Activated CD8-positive, alpha-beta T cell treated with anti-CD3 and anti-CD28 coated beads for 36 hours (primary cell): ENCODE measurements at regions of chr19 and their contacts with region 1.

Region 1: DNA sequence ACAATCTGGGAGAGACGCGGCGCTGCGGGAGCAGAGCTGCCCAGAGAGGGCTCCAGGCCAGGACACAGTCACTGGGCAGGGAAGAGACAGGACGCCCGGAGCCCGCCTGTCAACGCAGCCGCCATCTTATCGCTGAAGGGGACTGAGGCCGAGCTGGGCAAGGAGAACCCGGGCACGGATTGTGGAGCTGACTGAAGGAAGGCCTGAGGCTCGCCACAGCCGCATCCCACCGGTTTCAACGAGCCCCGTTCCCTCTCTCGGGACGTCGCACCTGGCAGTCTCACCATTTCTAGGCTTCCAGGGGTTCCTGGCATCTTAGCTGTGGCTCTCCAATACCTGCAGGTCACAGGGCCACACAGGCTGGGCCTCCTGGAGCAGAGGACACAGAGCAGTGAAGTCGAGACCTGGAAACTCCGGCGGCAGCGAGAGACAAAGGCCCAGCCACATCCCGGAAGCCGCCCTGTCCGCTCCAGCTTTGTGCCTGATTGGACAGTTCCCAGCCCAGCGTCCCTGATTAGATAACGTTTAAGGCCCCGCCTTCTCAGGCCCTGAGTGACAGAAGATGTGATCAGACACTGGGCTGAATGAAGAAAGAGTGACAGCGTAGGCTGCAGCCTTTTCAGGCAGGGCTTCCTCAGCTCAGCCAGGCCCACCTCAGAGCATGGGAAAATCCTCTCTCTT is at the start of gene ZNF91:
- DNase-seq: peak; percentile 98
- ATAC-seq: peak; percentile 96
- H3K4me3 Mint-ChIP-seq: peak within 1 kb of the TSS; percentile 97
- H3K27ac Mint-ChIP-seq: peak within 1 kb of the TSS; percentile 99
- H3K4me1 Mint-ChIP-seq: peaks cover 29% of the 10 kb centered on the region
- H3K27me3 Mint-ChIP-seq: no peaks in the 10 kb centered on the region
- CTCF ChIP-seq: no peak
- total RNA-seq, gene ZNF91: 35.8 to 38.2 TPM

Region 2: GRCh38 chr19:23273590-23274413 is 121.4 kb before region 1 on chr19:
- CTCF ChIA-PET with region 1: no interaction called
- POLR2A ChIA-PET with region 1: interaction called, 12 read pairs
- intact Hi-C with region 1: no loop called
- DNase-seq: peak; percentile 97
- ATAC-seq: peak; percentile 99
- H3K4me3 Mint-ChIP-seq: peak overlapping the region; percentile 91
- H3K27ac Mint-ChIP-seq: peak overlapping the region; percentile 92
- H3K4me1 Mint-ChIP-seq: peaks cover 23% of the 10 kb centered on the region
- H3K27me3 Mint-ChIP-seq: no peaks in the 10 kb centered on the region
- CTCF ChIP-seq: no peak

Region 3: DNA sequence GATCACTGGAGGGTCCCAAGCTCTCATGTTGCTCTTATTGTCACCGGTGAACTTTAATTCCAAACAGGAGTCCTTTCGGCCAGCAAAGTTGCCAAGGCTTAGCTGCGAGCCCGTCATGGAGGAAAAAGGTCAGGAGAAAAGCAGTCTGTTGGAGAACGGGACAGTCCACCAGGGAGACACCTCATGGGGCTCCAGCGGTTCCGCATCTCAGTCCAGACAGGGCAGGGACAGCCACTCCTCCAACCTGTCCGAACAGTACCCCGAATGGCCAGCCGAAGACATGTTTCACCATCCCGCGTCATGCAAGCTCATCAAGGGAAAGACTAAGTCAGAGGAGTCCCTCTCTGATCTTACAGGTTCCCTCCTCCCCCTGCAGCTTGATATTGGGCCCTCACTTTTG is 10.3 kb before region 1 on chr19:
- CTCF ChIA-PET with region 1: interaction called, 17 read pairs
- POLR2A ChIA-PET with region 1: interaction called, 18 read pairs
- intact Hi-C with region 1: no loop called
- DNase-seq: no peak
- ATAC-seq: no peak
- H3K4me3 Mint-ChIP-seq: no peak overlapping the region
- H3K27ac Mint-ChIP-seq: no peak overlapping the region
- H3K4me1 Mint-ChIP-seq: peaks cover 29% of the 10 kb centered on the region
- H3K27me3 Mint-ChIP-seq: no peaks in the 10 kb centered on the region
- CTCF ChIP-seq: no peak

Region 4: GRCh38 chr19:23525276-23525852 is 130.2 kb after region 1 on chr19:
- CTCF ChIA-PET with region 1: no interaction called
- POLR2A ChIA-PET with region 1: no interaction called
- intact Hi-C with region 1: no loop called
- DNase-seq: no peak
- ATAC-seq: no peak
- H3K4me3 Mint-ChIP-seq: no peak overlapping the region
- H3K27ac Mint-ChIP-seq: no peak overlapping the region
- H3K4me1 Mint-ChIP-seq: no peaks in the 10 kb centered on the region
- H3K27me3 Mint-ChIP-seq: no peaks in the 10 kb centered on the region
- CTCF ChIP-seq: no peak